ENCODE measurements at regions of chr3 and their contacts with region 1.

Region 1: GRCh38 chr3:60064210-60065178 is 1014.7 kb upstream of the CFAP20DC start:
- DNase-seq: peak; percentile 26
- H3K4me3 Mint-ChIP-seq: peak overlapping the region; percentile 13
- H3K27ac Mint-ChIP-seq: peak overlapping the region; percentile 87
- H3K4me1 Mint-ChIP-seq: peaks cover 60% of the 10 kb centered on the region
- H3K27me3 Mint-ChIP-seq: no peaks in the 10 kb centered on the region

Region 2: GRCh38 chr3:60053526-60054265 is 10.8 kb before region 1 on chr3:
- CTCF ChIA-PET with region 1: interaction called, 4 read pairs
- POLR2A ChIA-PET with region 1: no interaction called
- intact Hi-C with region 1: loop called (anchors 1 kb)
- DNase-seq: peak; percentile 67
- H3K4me3 Mint-ChIP-seq: no peak overlapping the region
- H3K27ac Mint-ChIP-seq: peak overlapping the region; percentile 83
- H3K4me1 Mint-ChIP-seq: peaks cover 79% of the 10 kb centered on the region
- H3K27me3 Mint-ChIP-seq: no peaks in the 10 kb centered on the region

Region 3: GRCh38 chr3:60294181-60294580 is 229.7 kb after region 1 on chr3:
- CTCF ChIA-PET with region 1: no interaction called
- POLR2A ChIA-PET with region 1: no interaction called
- intact Hi-C with region 1: no loop called
- DNase-seq: no peak
- H3K4me3 Mint-ChIP-seq: no peak overlapping the region
- H3K27ac Mint-ChIP-seq: no peak overlapping the region
- H3K4me1 Mint-ChIP-seq: no peaks in the 10 kb centered on the region
- H3K27me3 Mint-ChIP-seq: peaks cover 2% of the 10 kb centered on the region